ENCODE measurements at regions of chr10 and their contacts with region 1.

Region 1: DNA sequence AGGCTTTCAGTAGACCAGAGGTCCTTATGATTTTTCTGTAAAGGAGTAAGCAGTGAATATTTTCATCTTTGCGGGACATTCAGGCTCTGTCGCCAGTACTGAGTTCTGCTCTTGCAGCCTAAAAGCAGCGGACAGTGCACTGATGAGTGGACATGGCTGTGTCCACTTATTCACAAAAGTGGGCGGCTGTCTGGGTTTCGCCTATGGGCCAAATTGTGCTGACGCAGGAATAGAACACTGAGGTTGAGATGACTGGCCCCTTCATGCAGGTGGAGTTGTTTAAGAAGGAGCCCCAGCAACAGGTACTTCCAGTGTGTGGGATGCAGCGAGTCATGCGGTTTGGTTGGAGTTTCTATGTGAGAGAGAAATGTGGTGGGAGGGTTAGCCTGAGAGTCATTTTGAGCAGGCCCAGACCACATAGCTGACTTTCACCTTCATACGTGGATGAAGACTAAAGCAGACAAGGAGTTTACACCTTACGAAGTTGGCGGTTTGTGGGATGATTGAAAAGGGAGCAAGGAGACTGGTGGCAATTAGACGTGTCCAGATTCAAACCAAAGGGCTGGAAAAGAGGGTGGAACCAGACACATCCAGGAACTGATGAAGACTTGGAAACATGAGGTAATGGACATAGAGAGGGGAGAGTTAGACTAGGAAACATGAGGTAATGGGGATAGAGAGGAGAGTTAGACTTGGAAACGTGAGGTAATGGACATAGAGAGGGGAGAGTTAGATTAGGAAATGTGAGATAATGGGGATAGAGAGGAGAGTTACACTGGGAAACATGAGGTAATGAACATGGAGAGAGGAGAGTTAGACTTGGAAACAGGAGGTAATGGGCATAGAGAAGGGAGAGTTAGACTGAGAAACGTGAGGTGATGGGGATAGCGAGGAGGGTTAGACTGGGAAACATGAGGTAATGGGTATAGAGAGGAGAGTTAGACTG is 38.2 kb downstream of the WDR37 start:
- DNase-seq: peak; percentile 15
- H3K4me3 Mint-ChIP-seq: no peak overlapping the region
- H3K27ac Mint-ChIP-seq: no peak overlapping the region
- H3K4me1 Mint-ChIP-seq: peaks cover 6% of the 10 kb centered on the region
- H3K27me3 Mint-ChIP-seq: no peaks in the 10 kb centered on the region

Region 2: DNA sequence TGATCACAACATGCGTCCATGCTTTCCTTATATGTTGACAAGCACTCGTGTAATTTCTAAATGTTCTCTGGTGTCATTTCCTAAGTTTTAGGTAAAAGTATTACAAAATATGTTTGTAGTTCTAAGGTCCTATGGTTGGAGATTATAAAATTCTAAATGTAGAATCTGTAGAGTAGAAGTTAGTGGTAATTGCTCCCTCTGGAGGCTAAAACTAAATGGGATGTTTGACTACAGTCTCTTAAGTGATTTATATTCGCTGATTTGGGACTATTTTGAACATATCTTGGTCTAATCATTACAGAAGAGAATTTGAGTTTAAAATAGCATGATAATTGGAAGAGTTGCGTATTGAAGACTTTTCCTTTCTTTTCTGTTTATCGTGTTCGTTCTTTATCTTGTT is 885.0 kb before region 1 on chr10:
- intact Hi-C with region 1: no loop called
- DNase-seq: no peak
- H3K4me3 Mint-ChIP-seq: no peak overlapping the region
- H3K27ac Mint-ChIP-seq: no peak overlapping the region
- H3K4me1 Mint-ChIP-seq: no peaks in the 10 kb centered on the region
- H3K27me3 Mint-ChIP-seq: no peaks in the 10 kb centered on the region

Region 3: DNA sequence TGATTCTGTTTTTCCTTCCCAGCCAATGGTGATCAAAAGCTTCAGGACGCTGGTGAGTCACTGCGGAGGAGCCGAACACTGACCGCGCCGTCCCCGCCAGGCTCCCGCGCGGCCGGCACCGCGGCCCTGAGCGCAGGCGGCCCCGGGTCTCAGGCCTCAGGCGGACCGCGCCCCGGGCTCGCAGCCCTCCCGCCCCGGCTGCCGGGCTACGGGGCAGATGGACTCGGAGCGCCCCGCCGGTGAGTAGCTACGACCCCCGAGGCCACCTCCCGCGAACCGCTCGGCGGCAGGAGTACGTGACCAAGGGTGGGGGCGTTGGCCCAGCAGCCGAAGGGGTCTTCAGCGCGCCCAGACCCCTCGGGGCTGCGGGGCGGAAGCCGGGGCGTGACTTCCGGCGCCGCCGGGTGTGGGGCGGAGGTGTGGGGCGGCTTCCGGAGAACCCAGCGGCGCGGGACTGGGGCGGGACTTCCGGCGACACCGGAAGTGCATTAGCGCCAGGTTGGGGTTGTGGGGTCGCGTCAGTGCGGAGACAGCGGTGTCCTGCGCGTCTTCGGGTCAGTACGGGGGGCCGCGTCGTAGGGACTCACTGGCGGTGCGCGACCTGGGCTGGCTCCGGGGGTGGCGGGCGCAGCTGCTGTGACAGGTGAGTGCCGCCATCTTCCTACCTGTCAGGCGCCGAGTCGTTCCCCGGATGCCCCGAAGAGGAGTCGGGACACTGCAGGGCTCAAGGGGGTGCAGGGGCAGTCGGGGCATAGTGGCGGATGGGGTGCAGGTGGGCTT is 37.9 kb before region 1 on chr10 and contains the start of gene WDR37:
- intact Hi-C with region 1: loop called (anchors 5 kb)
- DNase-seq: peak; percentile 83
- H3K4me3 Mint-ChIP-seq: peak within 1 kb of the TSS; percentile 95
- H3K27ac Mint-ChIP-seq: peak within 1 kb of the TSS; percentile 87
- H3K4me1 Mint-ChIP-seq: peaks cover 67% of the 10 kb centered on the region
- H3K27me3 Mint-ChIP-seq: no peaks in the 10 kb centered on the region
- total RNA-seq, gene WDR37: 17.0 and 18.9 TPM in 2 replicates

Region 4: GRCh38 chr10:1109795-1110673 is 15.6 kb after region 1 on chr10:
- intact Hi-C with region 1: loop called (anchors 1 kb)
- DNase-seq: peak; percentile 70
- H3K4me3 Mint-ChIP-seq: peak overlapping the region; percentile 40
- H3K27ac Mint-ChIP-seq: peak overlapping the region; percentile 74
- H3K4me1 Mint-ChIP-seq: peaks cover 24% of the 10 kb centered on the region
- H3K27me3 Mint-ChIP-seq: no peaks in the 10 kb centered on the region

Region 5: GRCh38 chr10:1120801-1121211 is 26.4 kb after region 1 on chr10:
- intact Hi-C with region 1: no loop called
- DNase-seq: no peak
- H3K4me3 Mint-ChIP-seq: no peak overlapping the region
- H3K27ac Mint-ChIP-seq: no peak overlapping the region
- H3K4me1 Mint-ChIP-seq: peaks cover 16% of the 10 kb centered on the region
- H3K27me3 Mint-ChIP-seq: no peaks in the 10 kb centered on the region

Region 6: GRCh38 chr10:1358943-1359598 is 264.7 kb after region 1 on chr10:
- intact Hi-C with region 1: loop called (anchors 1 kb)
- DNase-seq: peak; percentile 11
- H3K4me3 Mint-ChIP-seq: no peak overlapping the region
- H3K27ac Mint-ChIP-seq: no peak overlapping the region
- H3K4me1 Mint-ChIP-seq: peaks cover 15% of the 10 kb centered on the region
- H3K27me3 Mint-ChIP-seq: peaks cover 22% of the 10 kb centered on the region